ENCODE measurements at regions of chr6 and their contacts with region 1.

Region 1: DNA sequence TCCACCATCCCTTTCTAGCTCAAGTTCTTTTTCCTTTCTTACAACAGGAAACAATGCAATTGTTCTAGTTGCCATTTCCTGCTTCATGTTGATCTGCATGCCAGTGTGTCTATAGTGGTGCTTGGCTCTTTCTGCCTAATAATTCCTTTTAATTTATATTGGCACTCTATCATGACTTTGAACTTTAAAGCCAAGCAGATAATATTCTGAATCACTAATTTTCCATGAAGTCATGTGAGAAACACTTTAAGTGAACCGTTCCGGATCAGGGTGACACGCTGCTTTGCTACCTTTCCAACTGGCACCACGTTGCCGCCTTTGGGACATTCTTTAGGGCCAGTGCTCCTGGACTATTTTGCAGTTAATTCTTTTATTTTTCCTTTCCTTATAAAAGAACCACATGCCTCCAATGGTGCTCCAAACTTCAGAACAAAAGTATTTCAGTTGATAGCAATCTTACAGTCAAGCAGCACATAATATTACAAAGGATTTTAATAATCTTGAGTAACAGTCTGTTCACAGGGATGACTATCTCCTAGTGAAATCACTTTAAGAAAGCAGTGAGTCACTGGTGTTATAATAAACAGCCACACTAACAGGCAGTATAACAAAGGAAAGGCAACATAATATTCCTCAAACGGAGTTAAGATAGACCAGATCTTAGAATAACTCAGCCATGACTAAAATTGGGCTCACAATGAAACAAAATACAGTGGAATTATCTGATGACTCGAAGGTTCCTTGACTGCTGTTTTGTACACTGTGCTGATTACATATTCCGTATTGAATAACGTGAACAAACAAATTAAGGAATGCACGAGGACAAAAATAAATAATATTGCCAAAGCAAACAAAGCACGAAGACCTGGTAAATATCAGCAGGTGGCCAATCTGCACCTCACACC is 19.0 kb upstream of the BLOC1S5 start:
- DNase-seq: peak; percentile 95
- H3K4me3 ChIP-seq: peak overlapping the region in 1 of 3 experiments; percentile 16
- H3K27ac ChIP-seq: peak overlapping the region; percentile 93
- H3K4me1 ChIP-seq: peaks cover 64% of the 10 kb centered on the region
- H3K27me3 ChIP-seq: no peaks in the 10 kb centered on the region
- CTCF ChIP-seq: no peak
- POLR2A ChIP-seq: no peak

Region 2: GRCh38 chr6:7604506-7604905 is 478.7 kb before region 1 on chr6:
- CTCF ChIA-PET with region 1: no interaction called
- POLR2A ChIA-PET with region 1: no interaction called
- dilution Hi-C with region 1: no loop called
- intact Hi-C with region 1: no loop called
- DNase-seq: no peak
- H3K4me3 ChIP-seq: no peak overlapping the region
- H3K27ac ChIP-seq: no peak overlapping the region
- H3K4me1 ChIP-seq: no peaks in the 10 kb centered on the region
- H3K27me3 ChIP-seq: no peaks in the 10 kb centered on the region
- CTCF ChIP-seq: no peak
- POLR2A ChIP-seq: no peak

Region 3: DNA sequence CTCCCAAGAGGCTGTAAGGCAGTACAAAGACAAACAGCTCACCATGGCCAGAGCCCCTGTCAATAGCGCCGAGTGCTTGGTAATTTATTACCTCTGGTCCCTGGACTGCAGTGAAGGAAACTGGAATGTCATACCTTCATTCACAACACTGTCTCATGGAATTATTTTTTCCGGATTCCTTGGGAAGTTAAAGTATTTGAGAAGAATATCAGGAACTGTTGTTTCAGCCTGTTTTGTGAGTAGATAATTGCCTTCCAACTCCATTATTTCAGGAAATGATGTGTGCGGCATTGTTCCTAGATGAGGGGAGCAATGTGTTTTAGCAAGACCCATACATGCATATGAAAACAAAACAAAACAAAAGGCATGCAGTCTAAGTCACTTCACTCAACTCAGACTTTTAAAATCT is 83.0 kb before region 1 on chr6:
- CTCF ChIA-PET with region 1: no interaction called
- POLR2A ChIA-PET with region 1: no interaction called
- dilution Hi-C with region 1: no loop called
- intact Hi-C with region 1: loop called (anchors 1 kb)
- DNase-seq: peak; percentile 99
- H3K4me3 ChIP-seq: no peak overlapping the region
- H3K27ac ChIP-seq: peak overlapping the region; percentile 96
- H3K4me1 ChIP-seq: peaks cover 89% of the 10 kb centered on the region
- H3K27me3 ChIP-seq: no peaks in the 10 kb centered on the region
- CTCF ChIP-seq: no peak
- POLR2A ChIP-seq: peak; percentile 87

Region 4: DNA sequence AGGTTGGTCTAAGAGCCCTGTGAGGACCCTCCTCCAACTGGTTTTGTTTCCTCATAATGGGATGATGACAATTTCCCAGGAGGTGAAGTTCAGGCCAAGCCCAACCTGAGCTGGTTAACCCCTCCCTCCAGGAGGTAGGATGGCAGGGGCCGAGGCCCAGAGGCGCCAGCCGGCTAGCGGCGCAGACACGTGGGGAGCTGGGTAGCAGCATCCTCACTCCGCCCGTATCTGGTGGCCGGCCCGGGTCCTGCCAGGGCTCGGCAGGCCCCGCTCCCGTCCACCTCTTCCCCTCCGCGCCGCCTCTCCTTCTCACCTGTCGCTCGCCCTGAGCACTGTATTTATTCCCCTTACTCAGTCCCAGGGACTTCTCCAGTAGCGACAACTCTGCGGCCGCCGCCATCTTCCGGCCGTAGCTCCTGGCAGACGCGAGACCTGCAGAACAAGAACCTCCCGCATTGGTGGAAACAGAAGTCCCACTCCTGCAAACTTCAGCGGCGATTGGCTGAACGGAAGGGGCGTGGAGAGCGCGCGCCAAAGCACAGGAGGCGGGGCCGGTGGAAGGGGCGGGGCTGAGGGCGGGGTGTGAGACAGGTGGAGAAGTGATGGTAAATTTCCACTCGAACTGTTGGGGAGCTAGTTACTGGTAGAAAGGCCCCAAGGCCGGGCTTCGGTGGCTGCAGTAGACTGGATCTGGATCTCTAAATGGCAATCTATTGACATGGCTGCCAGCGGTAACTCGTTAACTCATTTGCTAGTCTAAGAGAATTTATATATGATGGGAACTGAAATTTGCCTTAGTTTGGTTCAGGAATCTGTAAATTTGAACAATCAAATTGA is 19.1 kb after region 1 on chr6 and contains the start of gene EEF1E1:
- CTCF ChIA-PET with region 1: interaction called, 5 read pairs
- POLR2A ChIA-PET with region 1: interaction called, 3 read pairs
- dilution Hi-C with region 1: no loop called
- intact Hi-C with region 1: loop called (anchors 1 kb)
- DNase-seq: peak; percentile 96
- H3K4me3 ChIP-seq: peak within 1 kb of the TSS; percentile 67 to 99 (median 89)
- H3K27ac ChIP-seq: peak within 1 kb of the TSS; percentile 70
- H3K4me1 ChIP-seq: peaks cover 15% of the 10 kb centered on the region
- H3K27me3 ChIP-seq: no peaks in the 10 kb centered on the region
- CTCF ChIP-seq: no peak
- POLR2A ChIP-seq: peak; percentile 81
- total RNA-seq, gene EEF1E1: 58.1 and 62.4 TPM in 2 replicates

Region 5: DNA sequence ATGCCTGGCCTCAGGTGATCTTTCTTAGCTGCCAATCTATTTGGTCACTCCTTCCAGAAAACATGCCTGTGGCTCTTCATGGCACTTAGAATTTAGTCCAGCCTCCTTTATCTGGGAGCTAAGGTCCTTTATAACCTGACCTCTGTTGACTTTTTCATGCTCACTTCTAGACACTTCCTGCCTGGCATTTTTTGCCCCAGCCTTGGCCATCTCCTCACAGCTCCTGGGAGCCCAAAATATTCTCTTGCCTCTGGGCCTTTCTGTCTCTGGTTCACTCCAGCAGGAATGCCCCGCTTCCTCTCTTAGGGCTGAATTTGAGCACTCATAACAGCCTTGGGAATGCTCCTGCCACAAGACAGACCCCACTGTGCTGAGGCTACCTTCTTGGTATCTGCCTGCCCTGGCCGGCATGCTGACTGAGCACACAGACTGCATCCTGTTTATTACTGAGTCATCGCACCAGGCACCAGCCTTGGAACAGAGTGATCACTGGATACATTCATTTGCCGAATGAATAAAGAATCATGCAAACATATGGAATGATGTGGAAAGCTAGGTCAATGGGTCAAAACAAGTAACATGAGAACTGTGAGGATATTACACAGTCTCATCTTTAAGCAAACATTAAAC is 24.9 kb after region 1 on chr6:
- CTCF ChIA-PET with region 1: no interaction called
- POLR2A ChIA-PET with region 1: interaction called, 5 read pairs
- dilution Hi-C with region 1: no loop called
- intact Hi-C with region 1: loop called (anchors 1 kb)
- DNase-seq: peak; percentile 97
- H3K4me3 ChIP-seq: no peak overlapping the region
- H3K27ac ChIP-seq: peak overlapping the region; percentile 85
- H3K4me1 ChIP-seq: peaks cover 18% of the 10 kb centered on the region
- H3K27me3 ChIP-seq: no peaks in the 10 kb centered on the region
- CTCF ChIP-seq: no peak
- POLR2A ChIP-seq: no peak